Activated CD4-positive, alpha-beta memory T cell treated with anti-CD3 and anti-CD28 coated beads for 36 hours (primary cell): ENCODE measurements at regions of chr18 and their contacts with region 1.

Region 1: GRCh38 chr18:9082711-9083510 is 19.6 kb upstream of the NDUFV2 start:
- DNase-seq: peak; percentile 82
- H3K4me3 Mint-ChIP-seq: peak overlapping the region; percentile 70
- H3K27ac Mint-ChIP-seq: peak overlapping the region; percentile 100
- H3K4me1 Mint-ChIP-seq: peaks cover 51% of the 10 kb centered on the region
- H3K27me3 Mint-ChIP-seq: no peaks in the 10 kb centered on the region

Region 2: GRCh38 chr18:9095297-9096006 is 12.5 kb after region 1 on chr18:
- CTCF ChIA-PET with region 1: interaction called, 22 read pairs
- POLR2A ChIA-PET with region 1: interaction called, 149 read pairs
- intact Hi-C with region 1: loop called (anchors 1 kb)
- DNase-seq: peak; percentile 87
- H3K4me3 Mint-ChIP-seq: peak overlapping the region; percentile 68
- H3K27ac Mint-ChIP-seq: peak overlapping the region; percentile 100
- H3K4me1 Mint-ChIP-seq: peaks cover 68% of the 10 kb centered on the region
- H3K27me3 Mint-ChIP-seq: no peaks in the 10 kb centered on the region

Region 3: GRCh38 chr18:9109523-9109922 is 26.6 kb after region 1 on chr18:
- CTCF ChIA-PET with region 1: interaction called, 11 read pairs
- POLR2A ChIA-PET with region 1: interaction called, 100 read pairs
- intact Hi-C with region 1: no loop called
- DNase-seq: no peak
- H3K4me3 Mint-ChIP-seq: peak overlapping the region; percentile 90
- H3K27ac Mint-ChIP-seq: peak overlapping the region; percentile 75
- H3K4me1 Mint-ChIP-seq: peaks cover 82% of the 10 kb centered on the region
- H3K27me3 Mint-ChIP-seq: no peaks in the 10 kb centered on the region

Region 4: GRCh38 chr18:9147440-9148202 is 64.7 kb after region 1 on chr18:
- CTCF ChIA-PET with region 1: interaction called, 24 read pairs
- POLR2A ChIA-PET with region 1: interaction called, 103 read pairs
- intact Hi-C with region 1: loop called (anchors 1 kb)
- DNase-seq: peak; percentile 25
- H3K4me3 Mint-ChIP-seq: peak overlapping the region; percentile 7
- H3K27ac Mint-ChIP-seq: peak overlapping the region; percentile 78
- H3K4me1 Mint-ChIP-seq: peaks cover 71% of the 10 kb centered on the region
- H3K27me3 Mint-ChIP-seq: no peaks in the 10 kb centered on the region

Region 5: GRCh38 chr18:9240270-9240669 is 157.4 kb after region 1 on chr18:
- CTCF ChIA-PET with region 1: no interaction called
- POLR2A ChIA-PET with region 1: interaction called, 7 read pairs
- intact Hi-C with region 1: loop called (anchors 5 kb)
- DNase-seq: no peak
- H3K4me3 Mint-ChIP-seq: no peak overlapping the region
- H3K27ac Mint-ChIP-seq: peak overlapping the region; percentile 61
- H3K4me1 Mint-ChIP-seq: peaks cover 27% of the 10 kb centered on the region
- H3K27me3 Mint-ChIP-seq: no peaks in the 10 kb centered on the region